Activated T-helper 1 cell treated with anti-CD3 and anti-CD28 coated beads, Interleukin-12 subunit alpha, Interleukin-12 subunit beta, Interleukin-2, Interleukin-4 antibody, amounts not matched to agents 30 ng/mL and 10 ng/mL and 1 ng/mL, durations not matched to agents 14 hours and 24 hours and 36 hours (primary cell): ENCODE measurements at regions of chr12 and their contacts with region 1.

Region 1: DNA sequence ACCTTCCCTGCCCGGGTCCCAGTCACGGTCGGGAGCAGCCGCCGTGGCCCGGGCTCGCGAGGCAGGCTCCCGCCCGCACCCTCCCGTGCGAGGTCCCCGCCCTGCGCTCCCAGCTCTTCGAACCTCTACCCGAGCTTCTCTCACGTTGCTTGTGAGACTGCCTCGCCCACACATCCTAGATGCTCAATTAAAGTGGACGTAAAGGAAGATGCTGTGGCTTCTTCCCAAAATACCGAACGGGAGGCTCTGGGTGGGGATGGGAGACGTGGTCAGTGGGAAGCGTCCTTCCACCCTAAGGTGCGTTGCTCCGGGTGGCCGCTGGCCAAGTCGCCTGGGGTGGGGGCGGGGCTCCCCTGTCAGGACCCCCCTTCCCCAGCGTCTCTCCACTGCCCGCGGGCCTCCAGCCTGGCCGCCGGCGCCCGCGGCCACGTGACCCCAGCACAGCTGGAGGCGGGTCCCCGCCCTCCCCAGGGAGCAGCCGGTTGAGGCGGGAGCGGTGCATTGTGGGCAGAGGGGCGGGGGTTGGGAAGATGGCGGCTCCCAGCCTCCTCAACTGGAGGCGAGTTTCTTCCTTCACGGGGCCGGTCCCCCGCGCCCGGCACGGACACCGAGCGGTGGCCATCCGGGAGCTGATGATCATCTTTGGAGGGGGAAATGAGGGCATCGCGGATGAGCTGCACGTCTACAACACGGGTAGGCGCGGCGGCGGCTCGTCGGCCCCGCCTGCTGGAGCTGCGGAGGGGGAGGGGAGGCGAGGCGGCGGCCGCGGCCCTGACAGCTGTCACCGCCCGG is at the start of gene HCFC2:
- DNase-seq: peak; percentile 88
- H3K4me3 Mint-ChIP-seq: peak within 1 kb of the TSS; percentile 95
- H3K27ac Mint-ChIP-seq: peak within 1 kb of the TSS; percentile 86
- H3K4me1 Mint-ChIP-seq: peaks cover 36% of the 10 kb centered on the region
- H3K27me3 Mint-ChIP-seq: peaks cover 24% of the 10 kb centered on the region
- total RNA-seq, gene HCFC2: 8.5 and 8.9 TPM in 2 replicates

Region 2: DNA sequence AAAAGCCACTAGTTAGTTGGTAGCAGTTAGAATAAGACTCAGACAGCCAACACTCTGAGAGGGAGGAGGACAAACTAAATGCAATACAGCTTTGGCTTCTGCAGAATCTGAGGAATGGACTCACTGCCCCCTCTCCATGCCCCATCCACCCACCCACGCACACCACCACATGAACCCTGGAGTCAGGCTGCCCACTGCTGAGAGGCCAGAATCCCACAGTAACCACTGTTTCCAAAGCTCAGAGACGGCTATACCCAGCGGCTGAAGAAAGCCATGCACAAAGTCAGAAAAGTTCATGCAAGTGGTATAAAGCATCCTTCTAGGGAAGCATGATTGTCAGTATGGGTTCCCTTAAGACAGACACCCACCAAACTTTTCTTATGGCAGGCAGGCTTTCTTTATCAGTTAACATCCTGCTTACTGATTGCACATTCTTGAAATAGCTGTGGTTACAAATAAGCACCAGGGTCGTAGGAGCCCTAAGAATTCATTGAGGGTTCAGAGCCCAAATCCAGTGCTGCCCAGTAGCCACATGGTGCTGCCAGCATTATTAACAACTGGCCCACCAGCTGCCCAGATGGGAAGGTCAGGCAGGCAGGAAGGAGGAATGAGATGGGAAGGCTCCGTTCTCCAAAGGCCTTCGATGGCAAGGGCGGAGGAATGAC is 284.7 kb before region 1 on chr12:
- intact Hi-C with region 1: no loop called
- DNase-seq: no peak
- H3K4me3 Mint-ChIP-seq: no peak overlapping the region
- H3K27ac Mint-ChIP-seq: no peak overlapping the region
- H3K4me1 Mint-ChIP-seq: no peaks in the 10 kb centered on the region
- H3K27me3 Mint-ChIP-seq: no peaks in the 10 kb centered on the region

Region 3: DNA sequence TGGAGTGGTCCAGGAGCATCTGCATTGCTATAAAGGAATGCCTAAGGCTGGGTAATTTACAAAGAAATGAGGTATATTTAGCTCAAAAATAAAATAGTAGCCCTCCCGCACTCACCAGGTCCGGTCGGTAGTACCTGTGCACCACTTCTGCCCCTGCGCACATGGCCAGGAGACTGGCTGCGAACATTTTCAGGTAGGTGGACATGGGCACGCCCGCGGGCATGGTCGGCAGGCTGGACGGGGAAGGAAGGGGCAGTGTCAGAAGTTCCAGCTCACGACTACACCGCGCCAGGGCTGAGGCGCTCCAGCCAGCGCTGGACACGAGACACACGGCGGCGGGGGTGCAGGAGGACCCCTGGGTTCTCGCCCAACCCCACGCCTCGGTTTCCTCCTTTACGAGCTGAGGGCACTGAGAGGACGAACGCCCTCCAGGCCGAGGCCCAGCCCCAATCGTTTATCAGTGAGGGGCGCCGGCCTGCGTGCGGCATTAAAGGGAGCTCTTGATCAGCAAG is 107.7 kb before region 1 on chr12:
- intact Hi-C with region 1: loop called (anchors 2 kb)
- DNase-seq: peak; percentile 3
- H3K4me3 Mint-ChIP-seq: peak overlapping the region; percentile 100
- H3K27ac Mint-ChIP-seq: peak overlapping the region; percentile 100
- H3K4me1 Mint-ChIP-seq: peaks cover 61% of the 10 kb centered on the region
- H3K27me3 Mint-ChIP-seq: no peaks in the 10 kb centered on the region